Adrenal gland (tissue), 19 donors: ENCODE measurements at regions of chr15 and their contacts with region 1.

Region 1: DNA sequence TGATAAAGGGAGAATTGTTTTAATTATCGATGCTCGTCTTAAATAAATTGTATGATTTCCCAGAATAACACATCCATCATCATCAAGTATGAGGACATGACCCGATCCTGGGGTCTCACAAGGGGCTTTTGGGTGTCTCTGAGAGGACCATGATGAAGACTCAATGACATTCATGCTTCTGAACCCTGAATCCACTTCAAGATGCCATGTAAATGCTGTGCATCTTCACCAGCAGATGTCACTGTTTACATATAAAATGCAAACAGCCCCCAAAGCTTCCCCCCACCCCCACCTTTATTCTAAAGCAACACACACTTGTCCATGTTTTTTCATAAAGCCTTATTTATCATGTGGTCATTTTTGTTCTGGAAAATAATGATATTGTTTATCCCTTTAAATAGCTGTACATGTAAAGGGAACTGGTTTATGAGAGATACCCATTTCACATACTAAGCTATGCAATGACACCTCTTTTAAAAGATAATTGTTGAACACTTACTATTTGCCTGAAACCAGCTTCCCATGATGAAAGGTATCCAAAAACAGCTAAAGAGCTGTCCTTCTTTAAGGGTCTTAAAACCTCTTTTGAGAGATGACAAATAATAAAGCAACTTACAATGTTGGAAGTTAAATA is 69.7 kb upstream of the UBE3A start:
- DNase-seq: peak in 3 of 7 donors; percentile 8 to 25 (median 16)
- H3K4me3 ChIP-seq: no peak overlapping the region
- H3K27ac ChIP-seq: no peak overlapping the region
- H3K4me1 ChIP-seq: no peaks in the 10 kb centered on the region
- H3K27me3 ChIP-seq: no peaks in the 10 kb centered on the region
- CTCF ChIP-seq: peak; percentile 30 to 75 (median 66)
- POLR2A ChIP-seq: no peak

Region 2: DNA sequence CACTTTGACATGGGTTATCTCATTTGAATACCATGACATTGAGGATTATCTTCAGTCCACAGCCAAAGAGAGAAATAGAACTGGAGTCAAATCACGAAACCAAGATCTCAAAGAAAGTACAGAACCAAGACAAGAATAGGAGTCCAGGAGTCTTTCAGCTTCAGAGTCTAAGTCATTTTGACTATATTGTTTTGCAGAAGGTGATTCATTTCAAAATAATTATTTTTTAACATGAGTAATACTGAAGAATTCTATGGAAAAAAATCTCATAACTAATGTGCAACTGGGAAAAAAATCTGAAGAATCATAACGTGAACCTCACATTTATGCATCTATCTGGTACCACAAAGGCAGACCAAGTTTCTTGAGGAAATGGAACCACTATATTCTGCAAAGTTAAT is 130.0 kb before region 1 on chr15:
- intact Hi-C with region 1: no loop called
- DNase-seq: no peak
- H3K4me3 ChIP-seq: no peak overlapping the region
- H3K27ac ChIP-seq: no peak overlapping the region
- H3K4me1 ChIP-seq: peaks cover 0 to 5% of the 10 kb centered on the region in 2 donors
- H3K27me3 ChIP-seq: no peaks in the 10 kb centered on the region
- CTCF ChIP-seq: no peak
- POLR2A ChIP-seq: no peak

Region 3: DNA sequence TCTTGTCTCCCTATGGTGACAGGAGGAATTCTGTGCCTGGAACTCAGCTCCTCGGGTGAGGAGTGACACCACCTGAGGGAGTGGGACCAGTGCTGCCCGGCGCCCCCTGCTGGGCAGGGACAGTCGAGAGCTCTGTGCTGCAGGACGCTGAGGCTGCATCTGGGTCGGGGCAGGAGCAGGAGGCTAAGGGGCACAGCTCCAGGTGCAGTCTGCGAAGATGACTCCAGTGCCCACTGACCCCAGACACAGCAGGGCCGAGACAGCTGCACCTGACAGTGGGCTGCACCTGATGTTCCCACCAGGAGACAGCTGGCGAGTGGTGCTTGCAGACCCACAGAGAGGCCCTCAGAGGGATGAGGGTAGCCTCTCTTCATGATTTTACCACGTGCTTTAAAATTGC is 201.7 kb after region 1 on chr15:
- intact Hi-C with region 1: loop called in 1 of 2 experiments (anchors 5 kb)
- DNase-seq: peak; percentile 38 to 75 (median 63)
- H3K4me3 ChIP-seq: no peak overlapping the region
- H3K27ac ChIP-seq: no peak overlapping the region
- H3K4me1 ChIP-seq: no peaks in the 10 kb centered on the region
- H3K27me3 ChIP-seq: no peaks in the 10 kb centered on the region
- CTCF ChIP-seq: peak; percentile 43 to 75 (median 58)
- POLR2A ChIP-seq: no peak

Region 4: GRCh38 chr15:26864664-26865191 is 1356.2 kb after region 1 on chr15:
- intact Hi-C with region 1: loop called in 1 of 2 experiments (anchors 10 kb)
- DNase-seq: peak in 6 of 7 donors; percentile 18 to 67 (median 42)
- H3K4me3 ChIP-seq: no peak overlapping the region
- H3K27ac ChIP-seq: no peak overlapping the region
- H3K4me1 ChIP-seq: no peaks in the 10 kb centered on the region
- H3K27me3 ChIP-seq: peaks cover 32% of the 10 kb centered on the region
- CTCF ChIP-seq: peak; percentile 28 to 64 (median 53)
- POLR2A ChIP-seq: no peak